A549 (cell line): ENCODE measurements at regions of chr17 and their contacts with region 1.

Region 1: GRCh38 chr17:4625181-4625617 is 16.3 kb downstream of the ALOX15 start:
- DNase-seq: no peak
- ATAC-seq: peak in 1 of 2 experiments; percentile 47; a peak in 2 of 6 replicates
- H3K4me3 ChIP-seq: no peak overlapping the region
- H3K27ac ChIP-seq: no peak overlapping the region
- H3K4me1 ChIP-seq: no peaks in the 10 kb centered on the region
- CTCF ChIP-seq: no peak
- EP300 ChIP-seq: no peak
- POLR2A ChIP-seq: no peak
- RAD21 ChIP-seq: no peak

Region 2: GRCh38 chr17:4554997-4555799 is 70.0 kb before region 1 on chr17 and contains the start of gene MYBBP1A:
- CTCF ChIA-PET with region 1: interaction called, 15 read pairs
- POLR2A ChIA-PET with region 1: no interaction called
- DNase-seq: peak; percentile 97 to 100
- ATAC-seq: peak; percentile 92 to 97
- H3K4me3 ChIP-seq: peak within 1 kb of the TSS; percentile 92
- H3K27ac ChIP-seq: peak within 1 kb of the TSS; percentile 84 to 89
- H3K4me1 ChIP-seq: peaks cover 16% of the 10 kb centered on the region
- CTCF ChIP-seq: no peak
- EP300 ChIP-seq: no peak
- POLR2A ChIP-seq: peak; percentile 91
- RAD21 ChIP-seq: no peak
- polyA plus RNA-seq, gene MYBBP1A: 39.7 and 42.9 TPM in 2 replicates

Region 3: DNA sequence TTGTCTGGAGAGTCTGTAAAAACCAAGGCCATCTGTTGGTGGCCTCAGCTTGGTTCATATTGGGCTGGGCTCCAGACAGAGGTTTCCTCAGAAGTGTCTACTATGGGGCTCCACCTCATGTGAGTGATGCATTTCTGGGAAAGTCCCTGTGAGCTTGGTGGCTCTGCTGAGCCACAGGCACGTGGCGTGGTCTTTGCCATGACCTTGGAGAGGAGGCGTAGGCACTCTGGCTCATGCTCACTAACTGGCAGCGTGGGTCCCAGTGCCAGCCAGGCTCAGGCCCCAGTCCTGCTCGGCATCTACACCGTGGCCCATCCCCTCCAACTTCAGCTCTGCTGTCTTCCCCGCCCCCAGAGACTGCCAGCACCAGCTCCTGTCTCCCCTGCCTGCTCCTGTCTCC is 51.5 kb before region 1 on chr17:
- CTCF ChIA-PET with region 1: interaction called, 238 read pairs
- POLR2A ChIA-PET with region 1: no interaction called
- DNase-seq: peak; percentile 53 to 67
- ATAC-seq: peak; percentile 28 to 59; a peak in 4 of 6 replicates
- H3K4me3 ChIP-seq: no peak overlapping the region
- H3K27ac ChIP-seq: no peak overlapping the region
- H3K4me1 ChIP-seq: peaks cover 6% of the 10 kb centered on the region; the same call in 1 of the 3 replicates
- CTCF ChIP-seq: no peak
- EP300 ChIP-seq: no peak
- POLR2A ChIP-seq: no peak
- RAD21 ChIP-seq: no peak

Region 4: GRCh38 chr17:4583782-4584100 is 41.5 kb before region 1 on chr17:
- CTCF ChIA-PET with region 1: interaction called, 23 read pairs
- POLR2A ChIA-PET with region 1: no interaction called
- DNase-seq: peak; percentile 68 to 94
- ATAC-seq: peak; percentile 73 to 91
- H3K4me3 ChIP-seq: peak overlapping the region; percentile 49
- H3K27ac ChIP-seq: peak overlapping the region; percentile 23 to 70; a peak in 3 of 6 replicates
- H3K4me1 ChIP-seq: peaks cover 7% of the 10 kb centered on the region; the same call in 2 of the 3 replicates
- CTCF ChIP-seq: no peak; the same call in 2 of the 3 replicates
- EP300 ChIP-seq: no peak
- POLR2A ChIP-seq: no peak
- RAD21 ChIP-seq: no peak

Region 5: DNA sequence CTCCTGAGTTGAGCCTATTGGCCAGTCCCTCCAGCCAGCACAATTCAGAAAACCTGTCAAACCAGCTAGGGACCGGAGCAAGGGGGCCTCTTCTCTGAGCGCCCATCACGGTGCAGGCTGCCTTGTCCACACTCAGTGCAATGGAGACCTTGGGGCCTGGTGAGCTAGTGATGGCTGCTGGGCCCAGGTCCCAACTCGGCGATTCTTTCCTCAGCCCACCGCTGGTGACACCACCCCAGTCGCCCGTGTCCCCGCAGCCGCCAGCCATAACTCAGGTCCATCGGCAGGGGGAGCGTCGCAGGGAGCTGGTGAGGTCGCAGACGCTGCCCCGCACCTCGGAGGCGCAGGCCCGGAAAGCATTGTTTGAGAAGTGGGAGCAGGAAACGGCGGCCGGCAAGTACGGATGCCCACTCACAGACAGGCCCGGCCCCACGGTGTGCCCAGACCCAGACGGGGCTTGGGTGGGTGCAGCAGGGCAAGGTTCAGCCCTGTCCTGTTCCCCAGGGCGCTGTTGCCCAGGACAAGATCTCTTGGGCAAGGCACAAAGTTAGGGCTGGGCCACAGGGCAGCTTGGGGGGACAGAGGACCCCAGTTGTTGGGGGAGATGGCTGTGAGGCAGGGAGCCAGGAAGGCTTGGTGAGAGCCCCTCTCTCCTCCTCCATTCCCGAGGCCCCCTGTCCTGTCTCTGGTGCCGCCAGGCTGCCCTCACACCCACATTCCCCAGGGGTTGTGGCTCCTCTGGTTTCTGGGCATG is 30.1 kb before region 1 on chr17:
- CTCF ChIA-PET with region 1: interaction called, 58 read pairs
- POLR2A ChIA-PET with region 1: no interaction called
- DNase-seq: no peak
- ATAC-seq: no peak
- H3K4me3 ChIP-seq: no peak overlapping the region
- H3K27ac ChIP-seq: no peak overlapping the region
- H3K4me1 ChIP-seq: peaks cover 9% of the 10 kb centered on the region; the same call in 2 of the 3 replicates
- CTCF ChIP-seq: no peak
- EP300 ChIP-seq: no peak
- POLR2A ChIP-seq: no peak
- RAD21 ChIP-seq: no peak

Region 6: DNA sequence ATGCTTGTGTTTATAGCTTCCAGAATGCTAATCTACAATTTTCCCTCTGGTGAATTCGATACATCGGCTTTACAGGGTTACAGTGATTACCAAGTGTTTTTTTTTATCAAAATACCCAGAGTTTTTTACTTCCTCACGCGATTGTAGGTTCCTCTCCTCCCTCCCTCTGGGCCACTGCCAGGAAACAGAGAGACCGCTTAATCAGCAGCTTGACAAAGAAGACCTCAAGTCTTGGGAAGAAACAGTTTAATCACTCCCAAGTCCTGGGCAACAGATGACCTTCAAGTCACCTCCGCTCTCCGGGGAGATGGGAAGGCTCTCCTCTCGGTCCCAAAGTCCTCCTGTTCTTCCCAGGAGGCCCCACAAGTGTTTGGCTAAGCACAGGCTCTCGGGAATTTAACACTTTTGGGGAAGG is 17.4 kb before region 1 on chr17:
- CTCF ChIA-PET with region 1: interaction called, 58 read pairs
- POLR2A ChIA-PET with region 1: no interaction called
- DNase-seq: no peak
- ATAC-seq: no peak
- H3K4me3 ChIP-seq: no peak overlapping the region
- H3K27ac ChIP-seq: no peak overlapping the region
- H3K4me1 ChIP-seq: no peaks in the 10 kb centered on the region
- CTCF ChIP-seq: no peak
- EP300 ChIP-seq: no peak
- POLR2A ChIP-seq: no peak
- RAD21 ChIP-seq: no peak

Region 7: GRCh38 chr17:4635823-4636375 is 10.7 kb after region 1 on chr17:
- CTCF ChIA-PET with region 1: interaction called, 16 read pairs
- POLR2A ChIA-PET with region 1: no interaction called
- DNase-seq: no peak
- ATAC-seq: no peak
- H3K4me3 ChIP-seq: no peak overlapping the region
- H3K27ac ChIP-seq: no peak overlapping the region
- H3K4me1 ChIP-seq: 0 out of 3 replicates have a peak, but pooled peaks cover 3% of the 10 kb centered on the region
- CTCF ChIP-seq: no peak
- EP300 ChIP-seq: no peak
- POLR2A ChIP-seq: no peak
- RAD21 ChIP-seq: no peak

Region 8: GRCh38 chr17:4751932-4752331 is 126.7 kb after region 1 on chr17:
- CTCF ChIA-PET with region 1: no interaction called
- POLR2A ChIA-PET with region 1: no interaction called
- DNase-seq: peak in 1 of 2 experiments; percentile 52
- ATAC-seq: no peak
- H3K4me3 ChIP-seq: no peak overlapping the region
- H3K27ac ChIP-seq: no peak overlapping the region
- H3K4me1 ChIP-seq: no peaks in the 10 kb centered on the region
- CTCF ChIP-seq: no peak
- EP300 ChIP-seq: no peak
- POLR2A ChIP-seq: no peak
- RAD21 ChIP-seq: no peak